Thyroid gland (tissue), 4 donors: ENCODE measurements at regions of chr12 and their contacts with region 1.

Region 1: GRCh38 chr12:116015525-116015924 is 262.0 kb downstream of the MED13L start:
- DNase-seq: no peak
- H3K4me3 ChIP-seq: no peak overlapping the region
- H3K27ac ChIP-seq: no peak overlapping the region
- H3K4me1 ChIP-seq: peaks cover 0 to 9% of the 10 kb centered on the region in 2 donors
- H3K27me3 ChIP-seq: no peaks in the 10 kb centered on the region
- CTCF ChIP-seq: peak in 5 of 6 experiments; percentile 16 to 78 (median 69)
- POLR2A ChIP-seq: no peak

Region 2: GRCh38 chr12:115871714-115872113 is 143.8 kb before region 1 on chr12:
- intact Hi-C with region 1: no loop called
- DNase-seq: no peak
- H3K4me3 ChIP-seq: no peak overlapping the region
- H3K27ac ChIP-seq: peak overlapping the region in 1 of 3 donors; percentile 55
- H3K4me1 ChIP-seq: peaks cover 0 to 21% of the 10 kb centered on the region in 2 donors
- H3K27me3 ChIP-seq: no peaks in the 10 kb centered on the region
- CTCF ChIP-seq: peak; percentile 18 to 50 (median 27)
- POLR2A ChIP-seq: no peak

Region 3: DNA sequence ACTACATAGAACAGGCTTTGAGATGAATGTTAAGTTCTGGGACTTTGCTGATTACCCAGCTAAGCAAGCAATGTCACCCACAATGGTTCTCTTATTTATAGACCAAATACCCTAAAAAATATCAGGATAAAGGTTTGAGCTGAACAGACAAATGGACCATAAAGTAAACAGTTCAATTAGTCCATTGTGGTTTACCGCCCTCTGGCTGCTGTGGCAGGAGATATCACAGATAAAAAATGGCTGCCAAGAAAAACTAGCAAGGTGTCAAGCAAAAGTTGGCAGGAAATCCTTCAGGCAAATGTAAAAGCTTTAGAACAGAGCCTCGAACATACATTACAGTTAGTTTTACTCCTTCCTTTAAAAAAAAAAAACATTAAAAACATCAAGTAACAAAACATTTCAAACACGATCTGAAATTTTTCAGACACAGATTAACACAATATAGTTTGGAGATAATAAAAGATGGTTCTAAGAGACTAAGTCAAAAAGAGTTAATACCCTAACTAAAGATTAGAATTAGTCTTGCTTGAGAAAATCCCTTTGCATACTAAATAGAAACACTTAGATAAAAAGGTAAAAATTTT is 220.7 kb after region 1 on chr12:
- intact Hi-C with region 1: loop called (anchors 10 kb)
- DNase-seq: peak; percentile 48 to 65
- H3K4me3 ChIP-seq: no peak overlapping the region
- H3K27ac ChIP-seq: peak overlapping the region in 1 of 3 donors; percentile 15
- H3K4me1 ChIP-seq: peaks cover 17 to 38% of the 10 kb centered on the region in 2 donors
- H3K27me3 ChIP-seq: no peaks in the 10 kb centered on the region
- CTCF ChIP-seq: peak in 5 of 6 experiments; percentile 41 to 94 (median 84)
- POLR2A ChIP-seq: no peak